ENCODE measurements at regions of chr15 and their contacts with region 1.

Region 1: DNA sequence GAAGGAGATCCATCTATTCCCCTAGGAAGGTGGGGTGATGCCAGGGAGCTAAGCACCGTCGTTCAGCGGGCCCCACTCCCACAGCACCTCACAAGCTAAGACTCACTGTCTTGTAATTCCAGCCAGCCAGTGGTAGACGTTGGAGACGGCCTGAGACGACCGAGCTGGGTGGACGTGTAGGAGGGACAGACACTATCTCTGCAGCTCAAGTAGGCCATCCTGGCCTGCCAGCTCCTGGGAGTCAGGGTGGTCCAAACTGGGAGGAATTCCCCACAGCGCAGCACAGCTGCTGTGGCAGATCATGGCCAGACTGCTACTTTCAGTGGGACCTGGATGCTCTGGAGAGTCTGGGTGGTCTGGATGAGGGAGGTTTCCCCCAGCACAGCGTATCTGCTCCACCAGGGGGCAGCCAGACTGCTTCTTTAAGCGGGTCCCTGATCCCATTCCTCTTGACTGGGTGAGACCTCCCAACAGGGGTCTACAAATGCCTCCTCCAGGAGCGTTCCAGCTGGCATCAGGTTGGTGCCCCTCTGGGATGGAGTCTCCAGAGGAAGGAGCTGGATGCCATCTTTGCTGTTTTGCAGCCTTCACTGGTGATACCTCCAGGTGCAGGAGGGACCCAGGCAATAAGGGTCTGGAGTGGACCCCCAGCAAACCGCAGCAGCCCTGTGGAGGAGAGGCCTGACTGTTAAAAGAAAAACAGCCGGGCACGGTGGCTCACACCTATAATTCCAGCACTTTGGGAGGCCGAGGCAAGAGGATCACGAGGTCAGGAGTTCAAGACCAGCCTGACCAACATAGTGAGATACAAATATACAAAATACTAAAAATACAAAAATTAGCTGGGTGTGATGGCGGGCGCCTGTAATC is 27.6 kb downstream of the GNB5 start:
- DNase-seq: peak in 1 of 2 experiments; percentile 79
- H3K4me3 ChIP-seq: no peak overlapping the region
- H3K27ac ChIP-seq: peak overlapping the region; percentile 29
- H3K4me1 ChIP-seq: no peaks in the 10 kb centered on the region; a peak in 2 of 7 replicates
- H3K27me3 ChIP-seq: no peaks in the 10 kb centered on the region
- CTCF ChIP-seq: peak; percentile 69 to 77 (median 74)
- EP300 ChIP-seq: no peak
- POLR2A ChIP-seq: no peak
- RAD21 ChIP-seq: peak; percentile 57 to 67

Region 2: GRCh38 chr15:52186651-52187486 is 23.3 kb after region 1 on chr15:
- CTCF ChIA-PET with region 1: interaction called, 41 read pairs
- POLR2A ChIA-PET with region 1: no interaction called
- DNase-seq: no peak
- H3K4me3 ChIP-seq: no peak overlapping the region
- H3K27ac ChIP-seq: no peak overlapping the region
- H3K4me1 ChIP-seq: no peaks in the 10 kb centered on the region; a peak in 1 of 7 replicates
- H3K27me3 ChIP-seq: no peaks in the 10 kb centered on the region
- CTCF ChIP-seq: no peak
- EP300 ChIP-seq: no peak
- POLR2A ChIP-seq: no peak
- RAD21 ChIP-seq: no peak

Region 3: DNA sequence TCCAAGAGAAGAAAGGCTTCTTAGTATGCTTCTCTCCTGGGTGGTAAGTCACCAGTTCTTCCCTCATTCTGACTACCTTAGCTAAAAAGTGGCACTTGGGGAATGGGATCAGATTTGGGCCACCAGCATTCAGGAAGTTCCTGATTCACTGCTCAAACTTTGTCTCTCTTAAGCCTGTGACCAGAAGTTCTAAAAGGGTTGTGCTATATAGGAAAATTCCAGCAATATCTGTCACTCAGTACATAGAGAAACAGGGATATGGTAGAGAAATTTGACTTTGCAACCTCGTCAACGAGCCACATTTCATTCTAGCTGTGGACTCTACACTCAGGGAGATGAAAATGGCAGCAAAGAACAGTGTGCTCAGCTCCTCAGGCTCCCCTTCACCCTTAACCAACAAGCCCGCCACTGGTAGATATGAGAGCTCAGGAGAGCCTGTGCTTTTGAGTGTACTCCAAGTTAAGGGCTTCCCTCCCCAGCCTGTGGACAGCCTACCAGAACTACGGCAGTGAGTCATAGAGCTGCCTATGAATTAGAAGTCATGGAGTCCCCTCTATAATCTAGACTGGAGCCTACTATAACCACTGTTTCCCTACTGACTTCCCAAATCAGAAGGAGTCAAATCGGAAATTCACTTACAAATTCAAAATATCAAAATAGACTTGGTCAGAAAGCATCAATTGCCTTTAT is 184.6 kb after region 1 on chr15:
- CTCF ChIA-PET with region 1: no interaction called
- POLR2A ChIA-PET with region 1: no interaction called
- DNase-seq: no peak
- H3K4me3 ChIP-seq: no peak overlapping the region
- H3K27ac ChIP-seq: no peak overlapping the region
- H3K4me1 ChIP-seq: no peaks in the 10 kb centered on the region
- H3K27me3 ChIP-seq: peaks cover 0 to 1% (median 0%) of the 10 kb centered on the region in 4 experiments; a peak in 1 of 7 replicates
- CTCF ChIP-seq: no peak
- EP300 ChIP-seq: no peak
- POLR2A ChIP-seq: no peak
- RAD21 ChIP-seq: no peak